ENCODE measurements at regions of chr1 and their contacts with region 1.

Region 1: GRCh38 chr1:147890177-147890790 is 12.3 kb upstream of the GJA8 start:
- DNase-seq: peak; percentile 65 to 87 (median 70)
- ATAC-seq: peak; percentile 83 to 93 (median 90)
- H3K4me3 ChIP-seq: no peak overlapping the region
- H3K27ac ChIP-seq: no peak overlapping the region
- H3K4me1 ChIP-seq: peaks cover 0 to 31% (median 5%) of the 10 kb centered on the region in 12 donors
- H3K27me3 ChIP-seq: peaks cover 0 to 6% (median 0%) of the 10 kb centered on the region in 9 donors
- CTCF ChIP-seq: peak; percentile 50 to 82 (median 72)
- POLR2A ChIP-seq: no peak

Region 2: GRCh38 chr1:147494998-147495580 is 395.2 kb before region 1 on chr1:
- intact Hi-C with region 1: loop called in 9 of 10 experiments (anchors 1 to 10 kb)
- DNase-seq: peak; percentile 69 to 79 (median 75)
- ATAC-seq: peak; percentile 83 to 95 (median 93)
- H3K4me3 ChIP-seq: no peak overlapping the region
- H3K27ac ChIP-seq: no peak overlapping the region
- H3K4me1 ChIP-seq: peaks cover 0 to 23% (median 12%) of the 10 kb centered on the region in 12 donors
- H3K27me3 ChIP-seq: no peaks in the 10 kb centered on the region
- CTCF ChIP-seq: peak; percentile 89 to 96 (median 94)
- POLR2A ChIP-seq: no peak

Region 3: GRCh38 chr1:147640553-147641165 is 249.6 kb before region 1 on chr1:
- intact Hi-C with region 1: loop called in 9 of 10 experiments (anchors 2 to 5 kb)
- DNase-seq: peak; percentile 63 to 77 (median 73)
- ATAC-seq: peak; percentile 85 to 96 (median 94)
- H3K4me3 ChIP-seq: peak overlapping the region in 1 of 12 donors; percentile 18
- H3K27ac ChIP-seq: no peak overlapping the region
- H3K4me1 ChIP-seq: peaks cover 0 to 23% (median 6%) of the 10 kb centered on the region in 12 donors
- H3K27me3 ChIP-seq: no peaks in the 10 kb centered on the region
- CTCF ChIP-seq: peak; percentile 66 to 87 (median 74)
- POLR2A ChIP-seq: no peak

Region 4: GRCh38 chr1:147723691-147724323 is 166.5 kb before region 1 on chr1:
- intact Hi-C with region 1: loop called (anchors 1 to 2 kb)
- DNase-seq: peak; percentile 38 to 66 (median 51)
- ATAC-seq: peak; percentile 83 to 97 (median 94)
- H3K4me3 ChIP-seq: no peak overlapping the region
- H3K27ac ChIP-seq: no peak overlapping the region
- H3K4me1 ChIP-seq: peaks cover 0 to 11% (median 0%) of the 10 kb centered on the region in 12 donors
- H3K27me3 ChIP-seq: no peaks in the 10 kb centered on the region
- CTCF ChIP-seq: peak; percentile 35 to 79 (median 72)
- POLR2A ChIP-seq: no peak

Measured in heart left ventricle (tissue), 16 donors.